ENCODE measurements at regions of chr10 and their contacts with region 1.

Region 1: GRCh38 chr10:72048450-72049124 is 39.8 kb downstream of the SPOCK2 start:
- DNase-seq: peak; percentile 53
- H3K4me3 ChIP-seq: no peak overlapping the region
- CTCF ChIP-seq: peak; percentile 98

Region 2: GRCh38 chr10:71912431-71912830 is 136.2 kb before region 1 on chr10:
- CTCF ChIA-PET with region 1: interaction called, 42 read pairs
- POLR2A ChIA-PET with region 1: no interaction called
- DNase-seq: no peak
- H3K4me3 ChIP-seq: no peak overlapping the region
- CTCF ChIP-seq: peak; percentile 26

Region 3: GRCh38 chr10:71974489-71975021 is 74.0 kb before region 1 on chr10:
- CTCF ChIA-PET with region 1: interaction called, 18 read pairs
- POLR2A ChIA-PET with region 1: no interaction called
- DNase-seq: no peak
- H3K4me3 ChIP-seq: no peak overlapping the region
- CTCF ChIP-seq: no peak

Region 4: DNA sequence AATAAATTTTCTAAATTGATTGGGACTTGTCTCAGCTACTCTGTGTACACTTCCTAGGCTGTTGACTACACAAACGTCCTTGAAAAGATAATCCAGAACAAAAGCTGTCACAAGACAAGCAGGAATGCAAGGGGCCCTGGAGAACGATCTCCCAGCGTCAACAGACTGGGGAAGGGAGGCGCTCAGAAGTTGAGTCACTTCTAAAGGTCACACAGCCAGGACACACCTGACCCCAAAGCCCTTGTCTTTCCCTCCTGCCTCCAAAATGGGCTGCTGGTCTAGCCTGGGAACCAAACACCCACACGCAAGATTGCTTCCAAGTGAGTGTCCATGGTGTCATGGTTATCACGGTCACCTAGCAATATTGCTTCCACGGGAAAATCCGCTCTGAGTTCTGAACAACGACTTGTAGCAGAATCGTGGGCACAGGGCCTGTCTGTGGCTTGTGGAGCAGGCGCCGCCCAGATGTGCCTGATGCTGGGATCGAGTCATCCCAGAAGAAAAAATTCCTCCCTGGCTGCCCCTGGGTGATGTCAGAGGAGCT is 10.1 kb before region 1 on chr10:
- CTCF ChIA-PET with region 1: interaction called, 49 read pairs
- POLR2A ChIA-PET with region 1: no interaction called
- DNase-seq: no peak
- H3K4me3 ChIP-seq: no peak overlapping the region
- CTCF ChIP-seq: no peak

Region 5: GRCh38 chr10:72107325-72108003 is 58.9 kb after region 1 on chr10:
- CTCF ChIA-PET with region 1: interaction called, 10 read pairs
- POLR2A ChIA-PET with region 1: no interaction called
- DNase-seq: no peak
- H3K4me3 ChIP-seq: no peak overlapping the region
- CTCF ChIP-seq: no peak

Region 6: GRCh38 chr10:72260588-72261322 is 212.2 kb after region 1 on chr10:
- CTCF ChIA-PET with region 1: interaction called, 10 read pairs
- POLR2A ChIA-PET with region 1: no interaction called
- DNase-seq: no peak
- H3K4me3 ChIP-seq: peak overlapping the region; percentile 52
- CTCF ChIP-seq: peak; percentile 19

Region 7: DNA sequence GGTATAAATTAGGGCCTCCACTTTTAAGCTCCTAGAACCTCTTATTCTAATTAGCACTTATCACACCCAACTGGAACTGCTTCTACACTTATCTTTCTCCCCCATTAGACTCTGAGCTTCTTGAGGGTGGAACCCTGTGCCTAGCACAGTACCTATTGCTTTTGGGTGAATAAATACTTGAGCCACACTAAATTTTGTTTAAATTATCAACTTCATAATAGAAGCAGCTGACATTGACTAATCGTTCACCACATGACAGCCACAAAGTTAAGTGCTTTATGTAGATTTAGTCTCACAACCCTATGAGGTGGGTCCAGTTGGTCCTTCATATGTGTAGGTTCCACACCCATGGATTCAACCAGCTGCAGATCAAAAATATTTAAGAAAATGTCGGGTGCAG is 342.2 kb after region 1 on chr10:
- CTCF ChIA-PET with region 1: no interaction called
- POLR2A ChIA-PET with region 1: no interaction called
- DNase-seq: no peak
- H3K4me3 ChIP-seq: no peak overlapping the region
- CTCF ChIP-seq: no peak